Posterior cingulate gyrus (tissue), 11 donors: ENCODE measurements at regions of chr15 and their contacts with region 1.

Region 1: DNA sequence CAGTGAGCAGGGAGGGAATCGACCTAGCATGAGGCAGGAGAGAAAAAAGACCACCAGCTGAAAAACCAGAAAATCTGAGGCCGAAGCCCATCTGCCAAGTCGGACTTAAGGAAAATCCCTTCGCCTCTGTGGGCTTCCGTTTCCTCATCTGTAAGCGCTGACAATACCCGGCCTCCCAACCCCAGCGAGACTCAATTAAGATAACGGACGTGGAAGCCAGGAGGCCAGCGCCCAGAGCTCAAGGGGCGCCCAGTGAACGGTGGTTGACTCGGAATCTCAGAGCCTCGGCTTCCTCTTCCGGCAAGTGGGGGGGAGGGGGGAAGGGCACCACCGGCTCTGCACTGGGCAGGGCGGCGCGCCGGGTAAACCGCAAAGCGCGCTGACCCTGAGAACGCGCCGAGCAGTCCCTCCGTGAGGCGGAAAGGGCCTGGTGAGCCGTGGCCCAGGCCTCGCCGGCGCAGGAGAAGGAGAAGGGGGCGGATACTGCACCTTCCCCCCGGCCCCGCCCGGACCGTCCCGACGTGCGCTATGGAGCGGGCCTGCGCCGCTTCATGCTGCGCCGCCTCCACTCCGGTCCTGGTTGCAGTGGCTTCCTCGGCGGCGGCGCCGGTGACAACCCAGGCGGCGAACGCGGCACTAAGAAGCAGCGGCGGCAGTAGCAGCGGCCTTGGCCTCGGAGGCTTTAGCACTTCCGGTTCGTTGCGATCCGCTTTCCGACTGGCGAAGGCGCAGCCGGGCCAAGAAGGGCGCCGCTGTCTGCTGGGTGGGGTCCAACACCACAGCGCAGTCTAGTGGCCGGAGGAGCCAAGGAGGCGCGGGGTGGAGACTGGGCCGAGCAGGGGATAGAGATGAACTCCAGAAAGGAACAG is at the start of gene DPP8:
- DNase-seq: peak; percentile 91 to 99 (median 96)

Region 2: DNA sequence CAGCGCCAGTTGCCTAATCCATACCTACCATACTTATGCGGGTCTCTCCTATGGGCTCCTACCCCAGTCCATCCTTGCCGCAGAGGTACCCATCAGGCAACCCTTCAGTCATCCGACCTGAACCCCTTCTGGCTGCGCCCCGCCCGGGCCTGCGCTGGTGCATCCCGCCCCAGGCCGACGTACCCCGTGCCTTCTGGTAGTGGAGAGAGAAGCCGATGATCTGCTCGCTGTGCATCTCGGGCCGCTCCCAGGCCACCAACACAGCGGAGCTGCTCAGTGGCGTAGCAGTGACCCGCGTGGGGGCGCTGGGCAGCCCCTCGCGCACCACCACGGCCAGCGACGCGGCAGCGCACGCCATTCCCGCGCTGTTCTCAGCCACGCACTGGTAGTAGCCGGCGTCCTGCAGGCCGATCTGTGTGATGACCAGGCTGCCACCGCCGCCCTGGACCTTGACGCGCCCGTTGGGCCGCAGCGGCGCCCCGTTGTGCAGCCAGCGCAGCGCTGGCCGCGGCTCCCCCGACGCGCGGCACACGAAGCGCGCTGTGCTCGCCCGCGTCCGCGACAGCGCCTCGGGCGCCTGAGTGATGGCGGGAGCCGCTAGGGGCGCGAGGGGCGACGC is 121.6 kb before region 1 on chr15:
- intact Hi-C with region 1: no loop called
- DNase-seq: peak in 3 of 10 donors; percentile 52 to 76 (median 62)

Region 3: GRCh38 chr15:65530314-65531122 is 13.3 kb after region 1 on chr15 and contains the start of gene HACD3:
- intact Hi-C with region 1: loop called (anchors 1 kb)
- DNase-seq: peak; percentile 78 to 98 (median 84)